Calu3 (cell line): ENCODE measurements at regions of chr2 and their contacts with region 1.

Region 1: DNA sequence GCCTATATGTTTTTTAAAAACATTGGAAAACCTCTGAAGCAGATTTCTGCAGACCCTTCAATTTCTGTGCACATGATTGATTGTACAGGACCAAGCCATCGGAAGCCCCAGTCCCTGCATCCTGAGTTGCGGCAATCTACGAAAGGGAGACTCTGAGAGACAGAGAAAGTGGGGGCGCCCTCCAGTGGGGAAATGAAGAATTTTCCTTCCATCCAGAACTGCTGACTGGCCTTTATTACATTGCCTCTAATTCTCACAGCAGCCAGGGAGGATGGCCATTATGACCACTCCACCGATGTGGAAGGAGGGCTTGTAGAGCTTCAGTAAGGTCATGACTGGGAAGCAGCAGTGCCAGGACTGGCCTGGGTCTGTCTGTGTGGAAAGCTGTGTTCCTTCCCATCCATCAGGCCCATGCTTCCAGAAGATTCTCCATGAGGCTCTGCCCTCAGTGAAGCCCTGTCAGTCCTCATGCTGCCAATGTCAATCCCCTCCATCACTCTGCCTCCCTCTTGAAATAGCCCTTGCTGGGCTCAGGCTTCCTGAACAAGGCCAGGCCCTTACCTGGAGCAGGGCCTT is 20.0 kb upstream of the RESP18 start:
- DNase-seq: peak; percentile 81
- H3K4me3 Mint-ChIP-seq: no peak overlapping the region
- H3K27ac Mint-ChIP-seq: no peak overlapping the region
- H3K4me1 Mint-ChIP-seq: no peaks in the 10 kb centered on the region
- H3K27me3 Mint-ChIP-seq: peaks cover 82% of the 10 kb centered on the region
- CTCF ChIP-seq: peak; percentile 76

Region 2: DNA sequence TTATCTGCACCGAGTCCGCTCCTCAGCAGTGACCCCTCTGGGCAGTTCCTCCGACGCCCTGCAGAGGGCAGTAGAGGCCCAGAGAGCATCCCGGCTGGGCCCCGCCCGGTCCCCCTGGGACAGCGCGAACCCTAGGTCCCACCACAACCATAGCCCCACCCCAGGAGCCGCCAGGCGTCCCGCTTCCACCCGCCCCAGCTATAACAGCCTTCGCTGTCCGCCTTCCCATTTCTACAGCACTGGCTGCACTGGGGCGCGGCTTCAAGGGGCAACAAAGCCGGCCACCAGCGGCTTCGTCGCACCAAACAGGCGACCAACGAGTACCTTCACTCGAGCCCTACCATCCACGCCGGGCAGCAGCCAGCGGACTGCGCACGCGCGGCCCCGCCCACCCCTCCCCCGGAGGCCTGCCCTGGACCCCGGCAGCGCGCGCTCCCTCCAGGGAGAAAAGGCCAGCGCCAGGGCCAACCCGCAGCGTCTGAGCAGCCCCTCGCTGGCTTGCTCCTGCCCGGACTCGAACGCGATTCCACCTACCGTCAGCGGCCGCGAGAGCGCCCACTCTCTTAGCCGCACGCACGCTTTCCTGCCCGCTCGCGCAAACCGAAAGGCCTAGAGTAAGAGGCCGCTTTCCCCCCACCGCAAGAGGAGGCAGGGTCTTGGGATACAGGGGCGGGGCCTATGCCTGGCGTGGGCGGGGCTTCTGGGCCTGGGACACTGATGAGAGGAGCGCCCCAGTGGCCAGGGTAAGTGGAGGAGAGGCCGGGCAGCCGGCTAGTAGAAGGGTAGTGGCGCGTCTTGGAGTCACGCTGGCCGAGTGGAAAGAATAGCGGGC is 192.1 kb before region 1 on chr2 and contains the start of gene NHEJ1:
- CTCF ChIA-PET with region 1: no interaction called
- intact Hi-C with region 1: loop called (anchors 2 kb)
- DNase-seq: peak; percentile 97
- H3K4me3 Mint-ChIP-seq: peak within 1 kb of the TSS; percentile 83
- H3K27ac Mint-ChIP-seq: peak within 1 kb of the TSS; percentile 80
- H3K4me1 Mint-ChIP-seq: peaks cover 10% of the 10 kb centered on the region
- H3K27me3 Mint-ChIP-seq: no peaks in the 10 kb centered on the region
- CTCF ChIP-seq: peak; percentile 98
- total RNA-seq, gene NHEJ1: 12.1 and 12.4 TPM in 2 replicates

Region 3: GRCh38 chr2:219418155-219418569 is 65.6 kb after region 1 on chr2 and contains the start of gene DES:
- CTCF ChIA-PET with region 1: no interaction called
- intact Hi-C with region 1: no loop called
- DNase-seq: no peak
- H3K4me3 Mint-ChIP-seq: no peak within 1 kb of the TSS
- H3K27ac Mint-ChIP-seq: no peak within 1 kb of the TSS
- H3K4me1 Mint-ChIP-seq: no peaks in the 10 kb centered on the region
- H3K27me3 Mint-ChIP-seq: peaks cover 33% of the 10 kb centered on the region
- CTCF ChIP-seq: no peak
- total RNA-seq, gene DES: not detected in 2 replicates